ENCODE measurements at regions of chr10 and their contacts with region 1.

Region 1: GRCh38 chr10:110016039-110016438 is 8.3 kb downstream of the ADD3 start:
- DNase-seq: no peak
- H3K4me3 ChIP-seq: no peak overlapping the region
- H3K27ac ChIP-seq: peak overlapping the region; percentile 61
- H3K4me1 ChIP-seq: peaks cover 96% of the 10 kb centered on the region
- H3K27me3 ChIP-seq: no peaks in the 10 kb centered on the region
- CTCF ChIP-seq: peak; percentile 41

Region 2: DNA sequence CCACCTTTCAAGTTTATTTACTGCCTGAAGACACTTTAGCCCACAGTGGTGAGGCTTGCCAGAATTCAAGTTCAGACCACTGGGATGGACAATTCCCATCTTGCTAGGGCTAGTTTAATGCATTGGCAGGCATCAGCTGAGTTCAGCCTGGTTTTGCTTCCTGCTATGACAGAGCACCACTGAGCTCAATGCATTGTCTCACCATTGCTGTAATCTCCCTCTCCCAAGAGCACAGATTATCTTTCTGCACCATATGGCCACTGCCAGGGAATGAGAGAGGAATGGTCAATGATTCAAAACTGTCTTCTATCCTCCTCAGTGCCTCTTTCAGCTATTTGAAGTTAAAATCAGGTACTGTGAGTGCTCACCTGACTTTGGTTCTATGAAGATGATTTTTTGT is 253.5 kb before region 1 on chr10:
- intact Hi-C with region 1: no loop called
- DNase-seq: no peak
- H3K4me3 ChIP-seq: no peak overlapping the region
- H3K27ac ChIP-seq: no peak overlapping the region
- H3K4me1 ChIP-seq: no peaks in the 10 kb centered on the region
- H3K27me3 ChIP-seq: no peaks in the 10 kb centered on the region
- CTCF ChIP-seq: no peak

Region 3: DNA sequence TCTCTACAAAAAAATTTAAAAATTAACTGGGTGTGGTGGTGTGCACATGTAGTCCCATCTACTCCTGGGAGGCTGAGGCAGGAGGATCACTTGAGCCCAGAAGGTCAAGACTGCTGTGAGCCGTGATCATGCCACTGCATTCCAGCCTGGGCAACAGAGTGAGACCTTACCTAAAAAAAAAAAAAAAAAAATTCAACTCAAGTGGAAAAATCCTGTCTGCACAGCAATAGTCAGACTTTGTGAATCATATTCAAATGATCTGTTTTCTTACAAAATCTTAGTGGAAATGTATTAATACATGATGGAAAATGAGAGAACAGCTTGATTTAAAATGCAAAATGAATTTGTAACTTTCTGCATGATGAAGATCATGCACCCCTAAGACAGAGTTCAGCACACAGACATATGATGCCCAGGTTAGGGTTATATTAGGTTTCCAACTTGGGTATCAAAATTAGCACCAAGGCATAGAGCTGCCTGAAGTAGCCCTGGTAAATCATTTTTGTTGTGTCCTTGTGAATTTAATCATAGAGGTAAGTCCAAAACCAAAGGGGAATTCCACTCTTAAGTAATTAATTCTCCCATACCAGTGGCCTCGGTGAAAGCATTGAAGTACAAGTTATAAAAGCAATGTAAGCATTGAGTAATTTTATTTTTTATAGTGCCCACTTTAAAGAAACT is 85.6 kb after region 1 on chr10:
- intact Hi-C with region 1: loop called (anchors 10 kb)
- DNase-seq: no peak
- H3K4me3 ChIP-seq: no peak overlapping the region
- H3K27ac ChIP-seq: no peak overlapping the region
- H3K4me1 ChIP-seq: peaks cover 21% of the 10 kb centered on the region
- H3K27me3 ChIP-seq: no peaks in the 10 kb centered on the region
- CTCF ChIP-seq: no peak

Region 4: DNA sequence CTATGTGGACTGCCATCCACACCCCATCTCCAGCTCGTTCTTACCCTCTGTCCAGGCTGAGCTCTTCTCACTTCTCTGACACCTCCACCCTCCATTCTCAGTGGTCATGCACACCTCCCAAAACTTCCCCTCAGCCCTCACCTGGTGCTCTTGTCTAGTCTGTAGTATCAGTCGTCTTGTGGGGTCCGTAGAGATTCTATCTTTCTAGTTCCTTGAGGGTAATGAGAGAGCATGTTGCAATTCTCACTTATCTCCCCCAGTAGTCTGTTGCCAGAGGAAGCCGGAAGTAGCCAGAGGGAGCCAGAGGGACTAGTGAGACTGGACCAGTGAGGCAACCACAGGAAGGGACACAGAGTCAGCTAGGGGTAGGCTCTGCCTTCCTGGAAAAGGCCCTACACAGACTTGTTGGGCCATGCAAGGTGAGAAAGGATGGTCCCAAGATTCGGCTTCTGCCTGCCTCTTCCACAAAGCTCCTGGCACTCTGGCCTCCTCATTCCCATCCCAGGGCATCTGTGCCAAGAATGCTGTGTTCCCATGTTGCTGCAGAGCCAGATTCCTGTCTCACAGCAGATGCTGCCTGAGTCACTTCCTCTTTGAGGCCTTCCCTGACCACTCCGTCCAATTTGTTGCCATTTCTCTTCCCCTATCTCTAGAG is 431.0 kb after region 1 on chr10:
- intact Hi-C with region 1: no loop called
- DNase-seq: no peak
- H3K4me3 ChIP-seq: no peak overlapping the region
- H3K27ac ChIP-seq: no peak overlapping the region
- H3K4me1 ChIP-seq: peaks cover 30% of the 10 kb centered on the region
- H3K27me3 ChIP-seq: no peaks in the 10 kb centered on the region
- CTCF ChIP-seq: no peak